ENCODE measurements at regions of chr12 and their contacts with region 1.

Region 1: DNA sequence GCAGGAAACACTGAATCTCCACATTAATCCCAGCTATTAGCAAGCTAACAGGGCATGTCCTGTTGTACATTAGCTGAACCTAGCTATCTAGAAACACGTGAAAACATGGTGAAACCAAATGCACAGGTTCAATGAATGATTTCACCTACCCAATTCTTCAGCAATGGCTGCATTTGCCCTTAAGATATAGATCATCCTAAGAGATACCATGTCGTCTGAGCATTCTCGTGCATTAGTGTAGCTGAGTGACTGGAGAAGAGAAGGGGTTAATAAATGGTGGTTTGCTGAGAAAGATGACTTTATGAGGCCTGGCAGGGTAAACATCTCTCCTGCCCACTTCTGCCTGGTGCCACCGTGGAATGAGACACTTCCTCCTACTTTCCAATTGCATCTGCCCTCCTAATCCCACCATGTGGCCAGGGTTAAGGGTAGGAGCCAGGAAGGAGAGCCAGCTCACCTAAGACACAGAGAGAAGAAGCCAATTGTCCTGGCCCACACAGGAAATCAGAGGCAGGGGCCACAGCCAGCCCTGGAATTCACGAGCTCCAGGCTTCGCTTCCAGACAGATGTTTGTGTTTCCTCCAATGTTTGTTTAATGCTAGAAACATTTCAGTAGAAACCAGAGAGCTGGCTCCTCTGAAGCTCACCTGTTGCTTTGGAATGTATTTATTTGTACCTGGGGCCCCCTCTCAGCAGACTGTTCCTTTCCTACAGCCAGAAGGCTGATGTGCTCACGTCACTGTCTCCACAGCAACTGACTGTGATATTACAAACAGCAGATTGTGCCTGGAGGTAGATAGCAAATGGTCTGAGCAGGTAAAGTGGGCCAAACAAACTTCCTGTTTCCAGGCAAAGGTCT is 126.0 kb upstream of the PARP11 start:
- DNase-seq: no peak
- H3K4me3 ChIP-seq: no peak overlapping the region
- H3K27ac ChIP-seq: no peak overlapping the region
- H3K4me1 ChIP-seq: no peaks in the 10 kb centered on the region
- H3K27me3 ChIP-seq: no peaks in the 10 kb centered on the region
- CTCF ChIP-seq: no peak
- POLR2A ChIP-seq: no peak

Region 2: DNA sequence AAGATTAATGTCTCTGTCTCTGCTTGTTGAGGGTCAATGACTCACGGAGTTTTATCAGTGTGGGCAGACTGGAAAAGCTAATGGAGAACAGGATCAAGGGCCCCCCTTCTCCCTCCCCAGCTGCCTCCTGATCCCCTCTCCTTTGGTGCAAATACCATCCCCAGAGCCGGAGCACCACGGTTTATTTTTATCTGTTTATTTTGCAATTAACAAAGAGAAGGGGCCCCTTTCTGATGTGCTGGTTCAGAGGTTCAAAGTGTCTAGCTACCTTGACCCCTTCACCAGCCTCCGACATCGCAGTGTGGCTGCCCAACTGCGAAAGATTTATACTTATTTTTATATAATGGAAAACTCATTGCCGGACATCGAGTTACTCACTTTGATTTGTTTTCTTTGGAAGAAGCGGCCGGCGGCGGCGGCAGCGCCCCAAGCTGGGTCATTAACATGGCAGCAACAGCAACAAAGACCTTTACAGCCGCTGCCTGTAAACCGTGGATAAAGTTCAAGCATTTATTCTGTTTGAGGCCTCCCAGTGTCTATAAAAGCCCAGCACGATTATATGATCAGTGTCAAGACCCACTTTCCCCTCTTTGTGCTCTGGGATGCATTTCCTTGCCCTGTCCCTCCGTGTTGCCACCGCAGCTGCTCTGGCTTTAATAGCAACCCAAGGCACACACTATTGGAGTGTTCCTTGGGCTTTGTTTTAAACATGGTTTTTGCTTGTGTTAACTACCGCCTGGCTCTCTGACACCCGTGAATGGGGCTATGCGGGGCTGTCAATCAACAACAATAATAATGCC is 78.6 kb before region 1 on chr12:
- CTCF ChIA-PET with region 1: no interaction called
- POLR2A ChIA-PET with region 1: no interaction called
- dilution Hi-C with region 1: no loop called
- intact Hi-C with region 1: loop called (anchors 2 kb)
- DNase-seq: peak; percentile 64
- H3K4me3 ChIP-seq: no peak overlapping the region
- H3K27ac ChIP-seq: no peak overlapping the region
- H3K4me1 ChIP-seq: no peaks in the 10 kb centered on the region
- H3K27me3 ChIP-seq: peaks cover 6 to 8% of the 10 kb centered on the region in 2 experiments
- CTCF ChIP-seq: no peak
- POLR2A ChIP-seq: no peak

Measured in endothelial cell of umbilical vein (primary cell).